HEK293T (cell line): ENCODE measurements at regions of chr11 and their contacts with region 1.

Region 1: GRCh38 chr11:62671575-62672389 is at the starts of genes LBHD1 and UQCC3:
- DNase-seq: peak; percentile 62

Region 2: GRCh38 chr11:62621567-62622470 is 50.0 kb before region 1 on chr11 and contains the start of gene B3GAT3:
- CTCF ChIA-PET with region 1: no interaction called
- POLR2A ChIA-PET with region 1: interaction called, 12 read pairs
- DNase-seq: peak; percentile 98

Region 3: GRCh38 chr11:62652161-62653006 is 19.4 kb before region 1 on chr11:
- CTCF ChIA-PET with region 1: no interaction called
- POLR2A ChIA-PET with region 1: interaction called, 56 read pairs
- DNase-seq: no peak

Region 4: GRCh38 chr11:62726915-62727763 is 55.4 kb after region 1 on chr11 and contains the start of gene HNRNPUL2:
- CTCF ChIA-PET with region 1: no interaction called
- POLR2A ChIA-PET with region 1: interaction called, 24 read pairs
- DNase-seq: peak; percentile 92

Region 5: DNA sequence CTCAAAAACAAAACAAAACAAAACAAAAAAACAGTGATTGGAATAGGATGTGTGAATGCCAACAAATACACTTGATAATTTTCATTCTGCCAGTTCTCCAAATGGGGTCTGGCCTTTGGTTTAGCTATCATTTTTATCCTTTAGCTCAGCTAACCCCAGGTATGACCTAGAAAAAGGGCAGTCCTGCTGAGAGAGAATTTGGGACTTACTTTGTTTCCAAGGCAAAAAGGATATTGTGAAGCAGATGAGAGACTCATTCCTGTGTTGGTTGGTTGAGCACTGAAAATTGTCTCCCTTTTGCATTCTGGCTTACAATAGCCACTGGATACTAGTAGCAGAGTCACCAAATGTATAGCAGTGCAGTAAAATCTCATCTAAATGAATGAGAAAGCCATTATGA is 65.4 kb after region 1 on chr11:
- CTCF ChIA-PET with region 1: no interaction called
- POLR2A ChIA-PET with region 1: no interaction called
- DNase-seq: no peak